ENCODE measurements at regions of chr10 and their contacts with region 1.

Region 1: GRCh38 chr10:63583909-63584724 is 62.9 kb downstream of the REEP3 start:
- DNase-seq: no peak
- ATAC-seq: no peak
- H3K4me3 Mint-ChIP-seq: no peak overlapping the region
- H3K27ac Mint-ChIP-seq: no peak overlapping the region
- H3K4me1 Mint-ChIP-seq: no peaks in the 10 kb centered on the region
- H3K27me3 Mint-ChIP-seq: no peaks in the 10 kb centered on the region
- CTCF ChIP-seq: no peak

Region 2: DNA sequence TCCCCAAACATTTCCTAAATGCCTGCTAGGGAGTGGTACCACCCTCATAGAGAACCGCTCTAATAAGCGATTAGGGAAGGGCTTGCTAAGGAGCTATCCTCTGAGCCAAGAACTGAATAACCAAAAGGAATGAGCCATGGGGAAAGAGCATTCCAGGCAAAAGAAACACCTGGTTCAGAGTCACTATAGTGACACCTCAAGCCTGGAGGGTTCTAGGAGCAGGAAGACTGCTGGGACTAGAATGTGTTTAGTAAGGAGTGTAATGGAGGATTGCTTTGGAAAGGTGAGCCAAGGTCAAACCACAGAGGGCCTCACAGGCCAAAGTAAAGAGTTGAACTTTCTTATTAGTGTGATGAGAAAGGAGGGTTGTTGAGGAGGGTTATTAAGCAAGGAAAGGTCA is 489.7 kb before region 1 on chr10:
- CTCF ChIA-PET with region 1: no interaction called
- POLR2A ChIA-PET with region 1: no interaction called
- intact Hi-C with region 1: no loop called
- DNase-seq: no peak
- ATAC-seq: no peak
- H3K4me3 Mint-ChIP-seq: no peak overlapping the region
- H3K27ac Mint-ChIP-seq: no peak overlapping the region
- H3K4me1 Mint-ChIP-seq: no peaks in the 10 kb centered on the region
- H3K27me3 Mint-ChIP-seq: peaks cover 11% of the 10 kb centered on the region
- CTCF ChIP-seq: no peak

Region 3: DNA sequence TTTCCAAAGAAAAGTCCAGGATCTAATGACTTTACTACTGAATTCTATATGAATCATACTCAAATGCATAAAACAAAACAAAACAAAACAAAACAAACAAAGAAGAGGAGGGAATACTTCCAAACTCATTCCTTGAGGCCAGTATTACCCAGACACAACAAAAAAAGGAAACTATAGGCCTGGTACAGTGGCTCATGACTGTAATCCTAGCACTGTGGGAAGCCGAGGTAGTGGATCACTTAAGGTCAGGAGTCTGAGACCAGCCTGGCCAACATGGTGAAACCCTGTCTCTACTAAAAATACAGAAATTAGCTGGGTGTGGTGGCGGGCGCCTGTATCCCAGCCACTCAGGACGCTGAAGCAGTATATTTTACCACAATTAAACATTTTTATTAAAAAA is 336.3 kb before region 1 on chr10:
- CTCF ChIA-PET with region 1: no interaction called
- POLR2A ChIA-PET with region 1: no interaction called
- intact Hi-C with region 1: no loop called
- DNase-seq: no peak
- ATAC-seq: no peak
- H3K4me3 Mint-ChIP-seq: no peak overlapping the region
- H3K27ac Mint-ChIP-seq: no peak overlapping the region
- H3K4me1 Mint-ChIP-seq: peaks cover 79% of the 10 kb centered on the region
- H3K27me3 Mint-ChIP-seq: no peaks in the 10 kb centered on the region
- CTCF ChIP-seq: no peak

Region 4: GRCh38 chr10:63573068-63573697 is 10.9 kb before region 1 on chr10:
- CTCF ChIA-PET with region 1: no interaction called
- POLR2A ChIA-PET with region 1: no interaction called
- intact Hi-C with region 1: loop called (anchors 2 kb)
- DNase-seq: no peak
- ATAC-seq: no peak
- H3K4me3 Mint-ChIP-seq: no peak overlapping the region
- H3K27ac Mint-ChIP-seq: no peak overlapping the region
- H3K4me1 Mint-ChIP-seq: no peaks in the 10 kb centered on the region
- H3K27me3 Mint-ChIP-seq: no peaks in the 10 kb centered on the region
- CTCF ChIP-seq: no peak